Activated T-helper 1 cell treated with anti-CD3 and anti-CD28 coated beads, Interleukin-12 subunit alpha, Interleukin-12 subunit beta, Interleukin-2, Interleukin-4 antibody, amounts not matched to agents 30 ng/mL and 10 ng/mL and 1 ng/mL, durations not matched to agents 14 hours and 24 hours and 36 hours (primary cell): ENCODE measurements at regions of chr15 and their contacts with region 1.

Region 1: GRCh38 chr15:69755551-69756310 is 303.1 kb downstream of the RPLP1 start:
- DNase-seq: peak; percentile 79
- H3K4me3 Mint-ChIP-seq: peak overlapping the region; percentile 70
- H3K27ac Mint-ChIP-seq: peak overlapping the region; percentile 87
- H3K4me1 Mint-ChIP-seq: peaks cover 72% of the 10 kb centered on the region
- H3K27me3 Mint-ChIP-seq: peaks cover 2% of the 10 kb centered on the region

Region 2: DNA sequence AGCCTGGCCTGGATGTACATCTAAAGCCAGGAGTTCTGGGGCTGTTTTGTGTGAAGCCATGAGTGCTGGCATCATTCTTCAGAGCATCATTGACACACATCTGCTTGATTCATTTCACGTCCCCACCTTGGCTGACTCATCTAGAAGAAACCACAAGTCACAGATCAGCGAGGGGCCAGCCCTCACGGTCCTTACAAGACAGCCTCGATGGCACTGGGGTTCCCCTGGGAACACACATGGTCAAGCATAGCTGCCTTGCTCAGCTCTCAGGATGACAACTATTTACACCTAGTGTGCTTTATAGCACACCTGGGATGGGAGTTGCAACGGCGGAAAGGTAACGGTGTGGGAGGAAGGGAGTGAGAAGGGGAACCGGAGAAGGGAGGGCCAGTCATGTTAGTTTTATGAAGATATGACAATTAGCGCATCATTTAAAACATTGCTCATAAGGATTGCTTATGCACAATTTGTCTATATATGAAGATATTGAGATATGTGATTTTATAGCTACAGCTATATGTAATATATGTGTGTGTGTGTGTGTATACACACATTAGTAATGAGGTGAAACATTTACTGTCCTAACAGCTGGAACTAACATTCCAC is 76.0 kb before region 1 on chr15:
- intact Hi-C with region 1: loop called (anchors 2 kb)
- DNase-seq: peak; percentile 6
- H3K4me3 Mint-ChIP-seq: no peak overlapping the region
- H3K27ac Mint-ChIP-seq: no peak overlapping the region
- H3K4me1 Mint-ChIP-seq: peaks cover 19% of the 10 kb centered on the region
- H3K27me3 Mint-ChIP-seq: peaks cover 22% of the 10 kb centered on the region

Region 3: DNA sequence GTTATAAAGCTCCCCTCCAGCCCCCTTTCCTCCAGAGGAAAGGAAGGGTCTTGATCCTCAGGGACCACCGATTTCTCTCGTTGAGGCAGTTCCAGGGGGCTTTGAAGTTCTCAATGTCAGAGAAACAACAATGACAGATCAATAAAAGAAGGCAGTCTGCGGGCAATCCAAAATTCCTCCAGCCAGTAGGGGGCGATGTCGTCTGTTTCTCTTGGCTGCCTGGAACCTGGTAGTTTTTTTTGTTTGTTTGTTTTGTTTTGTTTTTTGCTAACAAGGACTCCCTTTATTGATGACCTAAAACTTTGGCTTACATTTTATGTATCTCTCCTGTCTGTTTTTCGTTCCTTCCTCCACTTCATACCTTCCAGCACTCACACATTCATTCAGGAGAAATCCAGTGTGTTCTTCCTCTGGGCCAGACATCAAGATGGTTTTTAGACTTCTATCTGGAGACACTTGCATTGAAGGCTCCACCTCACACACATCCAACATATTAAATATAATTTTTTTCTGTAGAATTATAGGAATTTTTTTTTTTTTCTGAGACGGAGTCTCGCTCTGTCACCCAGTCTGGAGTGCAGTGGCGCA is 26.5 kb before region 1 on chr15:
- intact Hi-C with region 1: loop called (anchors 2 kb)
- DNase-seq: peak; percentile 55
- H3K4me3 Mint-ChIP-seq: no peak overlapping the region
- H3K27ac Mint-ChIP-seq: no peak overlapping the region
- H3K4me1 Mint-ChIP-seq: peaks cover 59% of the 10 kb centered on the region
- H3K27me3 Mint-ChIP-seq: peaks cover 14% of the 10 kb centered on the region

Region 4: GRCh38 chr15:69976366-69976994 is 220.7 kb after region 1 on chr15:
- intact Hi-C with region 1: loop called (anchors 1 kb)
- DNase-seq: peak; percentile 41
- H3K4me3 Mint-ChIP-seq: no peak overlapping the region
- H3K27ac Mint-ChIP-seq: no peak overlapping the region
- H3K4me1 Mint-ChIP-seq: no peaks in the 10 kb centered on the region
- H3K27me3 Mint-ChIP-seq: peaks cover 16% of the 10 kb centered on the region

Region 5: DNA sequence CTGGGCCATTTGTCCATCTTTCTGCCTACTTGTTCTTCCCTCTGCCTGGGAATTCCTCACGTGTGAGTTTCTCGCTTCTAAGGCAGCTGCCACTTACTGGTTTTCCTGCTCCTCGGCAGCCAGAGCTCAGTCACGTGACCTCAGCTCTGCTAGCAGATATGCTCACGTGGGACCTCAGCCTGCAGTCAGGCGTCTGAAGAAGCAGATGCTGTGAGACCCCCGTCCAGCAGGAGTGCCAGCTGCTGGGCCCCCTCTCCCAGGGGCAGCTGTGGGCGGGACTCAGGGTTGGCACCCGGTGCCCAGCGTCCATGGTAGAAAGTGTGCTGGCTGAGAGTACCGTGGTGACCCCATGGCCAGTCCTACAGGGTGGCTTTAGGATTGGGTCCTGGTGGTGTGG is 503.3 kb after region 1 on chr15:
- intact Hi-C with region 1: loop called (anchors 5 kb)
- DNase-seq: peak; percentile 15
- H3K4me3 Mint-ChIP-seq: peak overlapping the region; percentile 45
- H3K27ac Mint-ChIP-seq: no peak overlapping the region
- H3K4me1 Mint-ChIP-seq: peaks cover 37% of the 10 kb centered on the region
- H3K27me3 Mint-ChIP-seq: peaks cover 50% of the 10 kb centered on the region

Region 6: DNA sequence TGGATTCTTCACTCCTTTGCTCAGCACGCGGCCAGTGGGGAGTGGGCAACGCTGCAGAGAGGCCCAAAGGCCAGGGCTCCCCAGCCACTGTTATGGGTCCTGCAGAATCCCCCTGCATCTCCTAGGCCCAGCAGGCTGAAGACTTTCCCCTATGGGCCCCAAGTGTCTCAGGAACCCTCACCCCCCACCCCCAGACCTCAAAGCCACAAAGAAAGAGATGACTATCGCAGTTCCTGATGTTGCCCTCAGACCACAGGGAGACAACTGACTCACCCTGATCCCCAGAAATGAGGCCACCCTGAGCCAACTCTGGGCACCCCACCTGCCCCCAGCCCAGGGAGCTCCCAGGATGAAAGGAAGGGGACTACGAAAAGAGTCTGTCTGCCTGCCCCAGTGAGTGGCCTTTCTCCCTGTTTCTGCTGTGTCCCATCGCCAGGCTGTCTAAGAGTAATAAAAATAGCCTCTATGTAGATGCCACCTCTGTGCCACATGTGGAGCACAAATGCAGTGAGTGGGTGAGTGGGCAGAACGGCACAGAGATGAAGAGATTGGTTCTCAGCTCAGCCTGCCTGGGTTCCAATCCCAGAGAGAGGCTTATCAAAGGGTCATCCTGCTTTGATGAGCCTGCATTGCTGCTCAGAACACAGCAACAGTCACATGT is 724.6 kb after region 1 on chr15:
- intact Hi-C with region 1: loop called (anchors 1 kb)
- DNase-seq: peak; percentile 55
- H3K4me3 Mint-ChIP-seq: peak overlapping the region; percentile 50
- H3K27ac Mint-ChIP-seq: peak overlapping the region; percentile 25
- H3K4me1 Mint-ChIP-seq: peaks cover 81% of the 10 kb centered on the region
- H3K27me3 Mint-ChIP-seq: peaks cover 53% of the 10 kb centered on the region

Region 7: GRCh38 chr15:70528270-70528706 is 772.6 kb after region 1 on chr15:
- intact Hi-C with region 1: loop called (anchors 1 kb)
- DNase-seq: peak; percentile 60
- H3K4me3 Mint-ChIP-seq: peak overlapping the region; percentile 27
- H3K27ac Mint-ChIP-seq: peak overlapping the region; percentile 50
- H3K4me1 Mint-ChIP-seq: peaks cover 32% of the 10 kb centered on the region
- H3K27me3 Mint-ChIP-seq: peaks cover 11% of the 10 kb centered on the region